Posterior vena cava (tissue), 2 donors: ENCODE measurements at regions of chr1 and their contacts with region 1.

Region 1: GRCh38 chr1:11134251-11134897 is 34.7 kb upstream of the EXOSC10 start:
- DNase-seq: no peak

Region 2: GRCh38 chr1:11067716-11068599 is 66.4 kb before region 1 on chr1:
- intact Hi-C with region 1: loop called in 1 of 2 experiments (anchors 1 kb)
- DNase-seq: peak; percentile 46